ENCODE measurements at regions of chrX and their contacts with region 1.

Region 1: DNA sequence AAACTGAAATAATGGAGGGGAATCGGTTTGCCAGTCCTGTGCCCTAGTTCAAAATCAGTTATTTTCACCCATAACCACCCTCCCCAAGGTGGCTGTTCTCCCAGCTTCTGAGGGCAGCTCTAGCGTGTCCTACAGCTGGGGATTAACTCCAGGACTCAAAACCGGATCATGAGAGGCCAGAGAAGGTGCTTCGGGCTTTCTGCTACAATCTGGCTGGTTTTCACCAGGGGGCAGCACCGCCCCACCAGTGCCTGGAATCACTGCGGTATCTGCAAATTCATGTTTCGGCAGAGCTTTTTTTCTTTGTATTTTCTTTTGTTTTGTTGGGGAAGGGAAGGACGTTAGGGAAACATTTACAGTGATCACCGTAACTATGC is 28.4 kb downstream of the PDHA1 start:
- DNase-seq: peak; percentile 53
- ATAC-seq: peak; percentile 62 to 91

Region 2: DNA sequence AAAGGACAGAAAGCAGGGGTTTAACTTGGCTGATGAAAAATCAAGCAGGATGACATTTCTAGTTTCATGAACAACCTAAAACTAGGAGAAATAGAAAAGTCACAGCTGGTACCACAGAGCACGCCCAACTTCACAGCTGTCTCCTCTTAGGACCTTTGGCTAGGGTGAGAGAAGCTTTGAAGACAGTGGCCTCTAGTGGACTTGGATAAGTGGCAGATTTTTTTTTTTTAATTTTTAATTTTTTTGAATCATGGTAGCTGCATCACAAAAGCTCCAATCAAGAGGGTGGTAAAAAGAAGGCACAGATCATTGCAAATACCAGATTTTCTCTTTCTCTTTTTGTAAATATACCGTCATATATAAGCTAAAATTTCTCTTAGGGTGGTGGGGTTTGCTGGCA is 163.3 kb after region 1 on chrX:
- intact Hi-C with region 1: loop called in 1 of 2 experiments (anchors 10 kb)
- DNase-seq: no peak
- ATAC-seq: no peak

Measured in left cardiac atrium (tissue), 4 donors.